K562 (cell line): ENCODE measurements at regions of chr9 and their contacts with region 1.

Region 1: DNA sequence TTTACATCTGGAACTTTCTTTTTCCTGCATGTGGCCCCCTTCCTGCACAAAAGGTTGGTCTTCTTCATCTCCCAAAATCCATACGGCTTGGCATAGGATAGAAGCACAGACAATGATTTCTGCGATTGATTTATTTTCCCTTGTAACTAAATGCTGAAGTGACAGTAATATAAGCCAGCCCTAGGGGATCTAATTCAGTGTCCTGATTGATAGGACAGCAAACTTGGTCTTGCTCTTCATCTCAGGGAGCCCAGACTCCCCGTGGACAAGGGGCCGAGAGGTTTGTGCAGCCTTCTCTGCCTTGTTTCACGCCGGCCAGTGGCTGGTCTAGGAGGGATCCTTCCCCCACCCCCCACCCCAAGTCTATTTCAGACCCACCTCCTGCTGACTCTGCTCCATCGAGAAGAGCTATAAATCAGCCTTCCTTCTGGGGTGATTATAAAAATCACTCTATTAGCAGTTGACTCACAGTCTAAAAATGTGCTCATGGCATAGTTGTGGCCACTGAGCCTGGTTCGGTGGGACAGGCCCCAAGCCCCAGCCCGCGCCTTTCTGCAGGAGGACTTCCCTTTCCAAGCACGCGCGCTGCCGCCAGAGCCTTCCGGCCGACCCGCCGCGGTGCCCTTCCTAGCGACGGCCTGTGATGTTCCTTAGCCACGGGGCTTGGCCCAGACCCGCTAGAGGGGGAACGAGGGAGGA is 89.8 kb upstream of the COL5A1 start:
- DNase-seq: no peak
- ATAC-seq: no peak
- H3K4me3 ChIP-seq: no peak overlapping the region
- H3K27ac ChIP-seq: no peak overlapping the region
- H3K4me1 ChIP-seq: no peaks in the 10 kb centered on the region; a peak in 2 of 5 replicates
- H3K27me3 ChIP-seq: peaks cover 8 to 88% of the 10 kb centered on the region in 2 experiments; a peak in 4 of 5 replicates
- CTCF ChIP-seq: no peak
- EP300 ChIP-seq: no peak
- POLR2A ChIP-seq: no peak
- RAD21 ChIP-seq: no peak

Region 2: GRCh38 chr9:134641173-134641985 is 89.6 kb after region 1 on chr9 and contains the start of gene COL5A1:
- CTCF ChIA-PET with region 1: no interaction called
- POLR2A ChIA-PET with region 1: no interaction called
- in situ Hi-C with region 1: no loop called
- intact Hi-C with region 1: loop called (anchors 10 kb)
- DNase-seq: peak; percentile 19 to 71 (median 57)
- ATAC-seq: peak; percentile 78
- H3K4me3 ChIP-seq: no peak within 1 kb of the TSS
- H3K27ac ChIP-seq: no peak within 1 kb of the TSS
- H3K4me1 ChIP-seq: peaks cover 0 to 9% of the 10 kb centered on the region in 2 experiments; a peak in 2 of 5 replicates
- H3K27me3 ChIP-seq: peaks cover 13 to 62% of the 10 kb centered on the region in 2 experiments; a peak in 4 of 5 replicates
- CTCF ChIP-seq: no peak
- EP300 ChIP-seq: no peak
- POLR2A ChIP-seq: no peak
- RAD21 ChIP-seq: no peak
- polyA plus RNA-seq, gene COL5A1: not detected

Region 3: DNA sequence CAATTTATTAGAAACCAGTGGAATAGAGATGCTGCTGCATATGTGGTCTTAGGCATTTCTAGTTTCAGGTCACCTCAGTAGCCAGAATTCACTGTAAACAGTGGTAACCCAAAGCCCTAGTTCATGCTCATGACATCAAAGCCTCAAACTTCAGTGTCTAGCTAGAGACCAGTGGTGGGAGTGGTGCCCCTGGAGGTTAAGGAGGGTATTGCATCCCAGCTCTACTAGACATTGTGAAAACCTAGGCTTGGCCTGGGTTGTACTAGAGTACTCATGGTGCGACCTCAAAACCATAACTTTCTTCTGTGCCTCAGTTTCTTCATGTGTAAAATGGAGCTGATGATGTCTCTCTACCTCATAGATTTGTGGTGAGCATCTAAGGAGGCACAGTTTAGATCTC is 108.6 kb after region 1 on chr9:
- CTCF ChIA-PET with region 1: no interaction called
- POLR2A ChIA-PET with region 1: no interaction called
- in situ Hi-C with region 1: no loop called
- intact Hi-C with region 1: no loop called
- DNase-seq: peak in 3 of 4 experiments; percentile 24 to 70 (median 65)
- ATAC-seq: no peak
- H3K4me3 ChIP-seq: no peak overlapping the region
- H3K27ac ChIP-seq: no peak overlapping the region
- H3K4me1 ChIP-seq: no peaks in the 10 kb centered on the region
- H3K27me3 ChIP-seq: no peaks in the 10 kb centered on the region; a peak in 1 of 5 replicates
- CTCF ChIP-seq: peak; percentile 30 to 62 (median 37); a peak in 4 of 6 replicates
- EP300 ChIP-seq: no peak
- POLR2A ChIP-seq: no peak
- RAD21 ChIP-seq: no peak